Heart left ventricle (tissue), 16 donors: ENCODE measurements at regions of chr4 and their contacts with region 1.

Region 1: GRCh38 chr4:159206427-159206871 is 103.6 kb downstream of the RAPGEF2 start:
- DNase-seq: no peak
- ATAC-seq: no peak
- H3K4me3 ChIP-seq: no peak overlapping the region
- H3K27ac ChIP-seq: peak overlapping the region in 4 of 12 donors; percentile 8 to 51 (median 36)
- H3K4me1 ChIP-seq: peaks cover 9 to 86% (median 47%) of the 10 kb centered on the region in 12 donors
- H3K27me3 ChIP-seq: no peaks in the 10 kb centered on the region
- CTCF ChIP-seq: no peak
- POLR2A ChIP-seq: no peak

Region 2: DNA sequence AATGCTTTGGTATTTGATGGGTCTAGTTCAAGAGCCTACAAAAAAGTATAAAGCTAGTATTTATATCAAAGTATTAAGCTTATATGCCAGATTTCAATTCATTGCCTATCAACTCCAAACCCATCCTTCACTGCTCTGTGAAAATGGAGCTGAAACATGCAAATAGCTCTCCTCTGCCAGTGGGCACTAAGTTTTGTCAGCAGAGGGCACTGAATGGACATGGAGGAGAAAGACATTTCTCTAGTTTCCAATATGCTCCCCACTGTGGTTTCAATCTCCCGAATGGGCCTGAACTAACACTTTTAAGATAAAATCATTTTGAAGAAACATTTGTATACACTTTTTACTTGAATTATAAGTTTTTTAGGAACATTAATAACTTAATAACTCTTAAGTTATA is 495.6 kb before region 1 on chr4:
- intact Hi-C with region 1: no loop called
- DNase-seq: no peak
- ATAC-seq: peak in 1 of 4 donors; percentile 24
- H3K4me3 ChIP-seq: no peak overlapping the region
- H3K27ac ChIP-seq: no peak overlapping the region
- H3K4me1 ChIP-seq: no peaks in the 10 kb centered on the region
- H3K27me3 ChIP-seq: no peaks in the 10 kb centered on the region
- CTCF ChIP-seq: peak in 3 of 12 donors; percentile 10 to 36 (median 30)
- POLR2A ChIP-seq: no peak

Region 3: DNA sequence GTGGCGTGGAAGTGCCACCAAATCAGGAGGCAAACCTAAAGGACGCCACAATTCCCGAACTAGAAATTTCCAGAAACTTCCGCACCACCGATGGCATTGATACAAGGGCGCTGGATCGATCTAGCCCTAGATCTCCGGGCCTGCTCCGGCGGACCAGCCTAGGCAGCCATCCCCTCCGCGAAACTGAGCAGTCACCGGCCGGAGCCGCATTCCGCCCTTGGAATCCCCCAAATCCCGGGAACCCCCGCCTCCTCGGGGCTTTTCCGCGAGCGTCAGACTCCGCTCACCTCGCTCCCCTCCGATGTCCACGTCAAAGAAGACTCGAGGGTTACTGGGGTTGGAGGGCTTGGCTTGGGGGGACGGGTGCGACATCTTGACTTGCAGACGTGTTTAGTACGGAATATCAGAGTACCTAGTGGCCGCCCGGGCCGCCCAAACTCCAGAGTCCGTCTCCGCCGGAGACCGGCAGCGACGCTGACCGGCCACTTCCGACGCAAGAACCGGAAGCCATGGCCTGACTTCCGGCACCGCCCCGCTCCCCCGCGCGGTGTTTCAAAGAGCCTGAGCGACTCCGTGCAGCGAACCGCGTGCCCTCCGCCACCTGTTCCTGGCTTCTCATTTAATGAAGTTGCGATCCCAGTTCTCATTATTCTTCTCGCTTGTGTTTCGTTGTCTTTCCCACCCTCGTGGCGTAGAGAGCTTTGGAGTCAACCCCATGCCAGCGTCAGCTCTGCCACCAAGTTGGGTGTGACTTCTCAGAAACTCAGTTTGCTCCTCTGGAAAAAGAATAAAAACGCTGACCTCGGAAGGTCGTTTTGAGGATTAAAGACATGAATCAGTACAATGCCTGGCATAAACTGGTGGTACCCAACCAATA is 483.3 kb before region 1 on chr4 and contains the start of gene PPID:
- intact Hi-C with region 1: loop called in 5 of 10 experiments (anchors 5 to 10 kb)
- DNase-seq: peak; percentile 86 to 92 (median 89)
- ATAC-seq: peak; percentile 91 to 98 (median 98)
- H3K4me3 ChIP-seq: peak within 1 kb of the TSS; percentile 70 to 95 (median 85)
- H3K27ac ChIP-seq: peak within 1 kb of the TSS; percentile 76 to 96 (median 94)
- H3K4me1 ChIP-seq: peaks cover 0 to 18% (median 12%) of the 10 kb centered on the region in 12 donors
- H3K27me3 ChIP-seq: no peaks in the 10 kb centered on the region
- CTCF ChIP-seq: no peak
- POLR2A ChIP-seq: peak in 1 of 2 donors; percentile 70
- total RNA-seq, gene PPID: 24.1 to 43.4 (median 30.7) TPM

Region 4: GRCh38 chr4:158856852-158857251 is 349.6 kb before region 1 on chr4:
- intact Hi-C with region 1: loop called (anchors 1 to 5 kb)
- DNase-seq: no peak
- ATAC-seq: peak; percentile 18 to 68 (median 60)
- H3K4me3 ChIP-seq: no peak overlapping the region
- H3K27ac ChIP-seq: no peak overlapping the region
- H3K4me1 ChIP-seq: peaks cover 0 to 16% (median 0%) of the 10 kb centered on the region in 12 donors
- H3K27me3 ChIP-seq: no peaks in the 10 kb centered on the region
- CTCF ChIP-seq: peak; percentile 39 to 71 (median 59)
- POLR2A ChIP-seq: no peak

Region 5: GRCh38 chr4:159283696-159284492 is 77.4 kb after region 1 on chr4:
- intact Hi-C with region 1: no loop called
- DNase-seq: no peak
- ATAC-seq: peak in 2 of 4 donors; percentile 32 to 39
- H3K4me3 ChIP-seq: peak overlapping the region in 3 of 12 donors; percentile 6 to 32 (median 26)
- H3K27ac ChIP-seq: peak overlapping the region in 5 of 12 donors; percentile 0 to 64 (median 1)
- H3K4me1 ChIP-seq: peaks cover 0 to 58% (median 32%) of the 10 kb centered on the region in 12 donors
- H3K27me3 ChIP-seq: no peaks in the 10 kb centered on the region
- CTCF ChIP-seq: no peak
- POLR2A ChIP-seq: no peak

Region 6: DNA sequence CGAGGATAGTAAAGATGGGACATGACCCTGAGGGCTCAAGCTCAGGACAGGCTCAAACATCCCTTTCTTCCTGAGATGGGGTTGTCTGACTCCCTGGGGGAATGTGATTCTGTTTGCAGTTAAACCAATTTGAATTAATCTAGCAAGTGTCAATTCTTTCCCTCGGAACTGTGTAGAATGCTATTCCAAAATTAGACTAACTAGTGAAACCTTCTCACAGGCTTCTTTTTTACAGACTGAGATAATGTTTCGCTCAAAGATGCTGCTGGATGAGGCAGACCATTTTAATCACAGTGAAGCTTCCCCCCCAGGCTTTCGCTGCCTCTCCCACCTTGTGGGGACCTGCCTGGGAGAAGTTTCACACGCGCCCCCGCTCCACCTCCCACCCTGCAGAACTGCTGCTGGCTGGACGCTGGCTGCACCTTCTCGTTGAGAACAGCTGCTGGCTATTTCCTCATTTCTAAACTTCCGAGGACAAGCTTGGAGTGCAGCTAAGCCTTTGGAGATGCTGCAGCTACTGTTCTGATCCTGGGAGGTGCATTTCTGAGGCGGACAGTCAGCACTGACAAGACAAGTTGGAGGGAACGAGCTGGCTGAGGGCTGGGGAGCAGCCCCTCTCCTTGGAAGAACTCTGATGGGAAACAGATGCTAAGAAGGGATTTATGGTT is 194.2 kb after region 1 on chr4:
- intact Hi-C with region 1: loop called in 1 of 10 experiments (anchors 5 kb)
- DNase-seq: peak in 2 of 5 donors; percentile 24 to 48
- ATAC-seq: peak in 3 of 4 donors; percentile 18 to 38 (median 24)
- H3K4me3 ChIP-seq: peak overlapping the region in 9 of 12 donors; percentile 10 to 46 (median 23)
- H3K27ac ChIP-seq: peak overlapping the region; percentile 41 to 88 (median 62)
- H3K4me1 ChIP-seq: peaks cover 0 to 62% (median 27%) of the 10 kb centered on the region in 12 donors
- H3K27me3 ChIP-seq: no peaks in the 10 kb centered on the region
- CTCF ChIP-seq: no peak
- POLR2A ChIP-seq: no peak